Naive thymus-derived CD8-positive, alpha-beta T cell (primary cell): ENCODE measurements at regions of chr7 and their contacts with region 1.

Region 1: DNA sequence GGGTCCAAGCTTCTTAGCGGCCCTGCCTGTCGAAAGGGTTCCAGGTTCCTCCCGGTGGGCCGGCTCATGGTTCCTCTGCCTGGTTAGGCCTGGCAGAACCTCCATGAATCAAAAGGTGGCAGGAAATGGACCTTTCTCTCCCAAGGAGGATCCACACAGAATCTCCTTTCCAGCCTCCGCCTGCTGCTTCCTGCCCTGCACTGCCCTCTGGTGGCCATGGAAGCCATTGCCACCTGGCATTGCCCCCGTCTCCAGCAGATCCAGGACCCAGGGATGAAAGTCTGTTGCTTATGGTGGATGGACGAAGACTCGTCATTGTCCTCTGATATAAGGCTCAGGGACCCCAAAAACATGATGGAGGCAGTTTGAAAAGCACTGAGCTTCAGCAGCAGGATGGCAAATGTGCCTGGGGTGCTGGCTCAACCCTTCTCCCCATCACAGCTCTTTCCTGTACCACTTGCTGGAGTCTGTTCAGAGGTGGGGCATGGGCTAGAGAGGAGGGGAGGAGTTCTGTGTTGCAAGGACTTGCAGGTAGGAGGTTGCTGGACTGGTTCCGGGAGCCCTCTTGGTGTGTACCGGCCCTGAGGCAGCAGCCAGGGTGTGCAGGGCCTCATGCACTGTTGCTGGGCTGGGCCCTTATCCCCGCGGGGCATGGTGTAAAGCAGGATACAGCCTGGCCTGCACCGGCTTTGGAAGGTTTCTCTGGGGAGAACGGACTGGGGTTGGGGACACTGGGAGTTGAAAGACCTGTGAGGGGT is 11.3 kb upstream of the INMT start:
- DNase-seq: peak; percentile 56 to 85 (median 74)
- ATAC-seq: peak; percentile 46 to 77
- H3K4me3 Mint-ChIP-seq: peak overlapping the region in 2 of 10 donors; percentile 38 to 44
- H3K27ac Mint-ChIP-seq: peak overlapping the region; percentile 35 to 92 (median 66)
- H3K4me1 Mint-ChIP-seq: peaks cover 18 to 43% (median 37%) of the 10 kb centered on the region in 4 donors
- H3K27me3 Mint-ChIP-seq: peaks cover 0 to 2% (median 0%) of the 10 kb centered on the region in 5 donors

Region 2: GRCh38 chr7:30594549-30595435 is 145.8 kb before region 1 on chr7 and contains the start of gene GARS1:
- POLR2A ChIA-PET with region 1: interaction called, 10 read pairs
- DNase-seq: peak; percentile 82 to 94 (median 88)
- ATAC-seq: peak; percentile 85 to 88
- H3K4me3 Mint-ChIP-seq: peak within 1 kb of the TSS; percentile 95 to 100 (median 98)
- H3K27ac Mint-ChIP-seq: peak within 1 kb of the TSS; percentile 98 to 100 (median 100)
- H3K4me1 Mint-ChIP-seq: peaks cover 28 to 78% (median 58%) of the 10 kb centered on the region in 4 donors
- H3K27me3 Mint-ChIP-seq: no peaks in the 10 kb centered on the region
- polyA plus RNA-seq, gene GARS1: 64.4 to 102 (median 73.0) TPM

Region 3: DNA sequence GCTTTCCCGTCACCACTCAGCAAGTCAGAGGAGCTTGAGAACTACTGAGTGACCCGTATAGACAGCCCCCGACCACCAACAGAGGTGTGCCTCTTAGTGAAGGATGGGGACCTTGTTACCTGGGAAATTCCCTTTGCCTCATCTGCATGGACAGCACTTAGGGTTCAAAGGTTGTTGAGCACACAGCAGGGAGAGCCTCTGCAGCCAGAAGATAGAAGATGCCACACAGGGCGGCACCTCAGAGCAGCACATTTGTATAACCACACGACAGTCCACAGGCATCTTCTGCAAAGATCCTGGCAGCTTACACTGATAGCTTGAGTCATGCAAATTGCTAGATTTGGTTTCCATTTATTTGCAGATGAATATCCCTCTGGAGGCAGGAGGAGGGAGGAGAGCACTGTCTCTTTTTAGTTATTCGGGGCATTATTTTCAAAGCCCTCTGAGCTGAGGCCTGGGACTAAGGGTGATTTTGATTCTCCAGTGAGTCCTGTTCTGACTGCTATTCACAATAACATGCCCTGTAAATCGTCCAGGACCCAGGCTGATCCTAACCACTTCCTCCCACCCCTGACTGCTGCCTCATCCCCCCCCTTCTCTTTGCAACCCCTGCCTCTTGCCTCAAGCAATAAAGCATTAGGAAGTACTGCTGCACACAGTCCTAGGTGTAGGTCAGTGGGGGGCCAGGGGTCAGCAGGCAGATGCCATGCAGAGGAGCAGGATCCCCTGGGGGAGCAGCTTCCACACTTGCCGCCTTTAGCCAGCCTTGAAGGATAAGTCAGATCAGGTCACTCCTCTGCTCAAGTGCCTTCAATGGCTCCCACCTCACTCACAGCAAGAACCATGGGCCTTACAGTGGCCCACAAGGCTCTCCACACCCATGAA is 13.3 kb before region 1 on chr7:
- POLR2A ChIA-PET with region 1: interaction called, 199 read pairs
- DNase-seq: peak; percentile 22 to 84 (median 59)
- ATAC-seq: peak; percentile 93
- H3K4me3 Mint-ChIP-seq: peak overlapping the region; percentile 83 to 91 (median 89)
- H3K27ac Mint-ChIP-seq: peak overlapping the region; percentile 80 to 96 (median 94)
- H3K4me1 Mint-ChIP-seq: peaks cover 46 to 87% (median 70%) of the 10 kb centered on the region in 4 donors
- H3K27me3 Mint-ChIP-seq: no peaks in the 10 kb centered on the region

Region 4: DNA sequence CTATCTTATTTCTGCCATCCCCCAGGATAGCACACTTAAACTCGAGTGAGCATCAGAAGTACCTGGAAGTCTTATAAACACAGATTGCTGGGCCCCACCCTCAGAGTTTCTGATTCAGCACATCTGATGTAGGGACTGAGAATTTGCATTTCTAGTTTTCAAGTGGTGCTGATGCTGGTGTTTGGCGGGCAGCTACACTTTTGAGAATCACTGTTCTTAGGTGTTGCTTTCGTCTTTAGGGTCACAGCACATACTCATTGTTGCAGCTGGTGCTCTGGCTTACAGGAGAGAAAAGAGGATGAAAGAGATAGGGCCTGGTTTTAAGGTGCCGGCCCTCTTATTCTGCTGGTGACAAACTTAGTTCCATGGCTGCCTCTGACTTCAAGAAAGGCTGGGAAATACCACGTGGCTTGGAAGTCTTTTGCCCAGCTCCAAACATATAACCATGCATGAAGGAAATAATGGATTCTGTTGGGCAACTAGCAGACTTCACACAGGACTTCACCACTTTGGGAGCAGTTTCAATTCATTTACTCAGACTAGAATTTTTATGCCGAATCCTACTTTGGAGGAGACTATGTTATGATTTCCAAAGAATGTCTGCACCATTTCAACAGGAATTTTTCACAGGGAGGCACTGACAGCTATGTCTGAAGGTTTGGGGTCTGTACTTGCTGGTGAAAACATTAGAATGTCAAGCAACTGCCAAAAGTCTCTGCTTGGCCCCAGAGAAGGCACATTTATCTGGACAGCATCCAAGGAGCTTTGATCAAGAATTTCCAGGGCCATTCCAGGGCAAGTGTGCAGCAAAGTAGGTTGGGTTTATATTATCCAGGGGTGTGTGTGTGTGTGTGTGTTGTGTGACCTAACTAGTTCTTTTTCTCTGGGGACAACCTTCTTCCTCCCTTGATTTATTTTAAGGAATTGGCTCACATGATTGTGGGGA is 23.7 kb after region 1 on chr7:
- POLR2A ChIA-PET with region 1: no interaction called
- DNase-seq: no peak
- ATAC-seq: no peak
- H3K4me3 Mint-ChIP-seq: no peak overlapping the region
- H3K27ac Mint-ChIP-seq: no peak overlapping the region
- H3K4me1 Mint-ChIP-seq: peaks cover 0 to 3% (median under 1%) of the 10 kb centered on the region in 4 donors
- H3K27me3 Mint-ChIP-seq: peaks cover 3 to 12% (median 5%) of the 10 kb centered on the region in 5 donors